ENCODE measurements at regions of chr6 and their contacts with region 1.

Region 1: GRCh38 chr6:45608252-45608911 is 230.6 kb upstream of the SUPT3H start:
- DNase-seq: peak; percentile 75 to 97
- H3K4me3 ChIP-seq: peak overlapping the region; percentile 2; the same call in 1 of the 2 replicates
- H3K27ac ChIP-seq: peak overlapping the region; percentile 95
- H3K4me1 ChIP-seq: peaks cover 62% of the 10 kb centered on the region
- H3K27me3 ChIP-seq: no peaks in the 10 kb centered on the region
- CTCF ChIP-seq: no peak

Region 2: DNA sequence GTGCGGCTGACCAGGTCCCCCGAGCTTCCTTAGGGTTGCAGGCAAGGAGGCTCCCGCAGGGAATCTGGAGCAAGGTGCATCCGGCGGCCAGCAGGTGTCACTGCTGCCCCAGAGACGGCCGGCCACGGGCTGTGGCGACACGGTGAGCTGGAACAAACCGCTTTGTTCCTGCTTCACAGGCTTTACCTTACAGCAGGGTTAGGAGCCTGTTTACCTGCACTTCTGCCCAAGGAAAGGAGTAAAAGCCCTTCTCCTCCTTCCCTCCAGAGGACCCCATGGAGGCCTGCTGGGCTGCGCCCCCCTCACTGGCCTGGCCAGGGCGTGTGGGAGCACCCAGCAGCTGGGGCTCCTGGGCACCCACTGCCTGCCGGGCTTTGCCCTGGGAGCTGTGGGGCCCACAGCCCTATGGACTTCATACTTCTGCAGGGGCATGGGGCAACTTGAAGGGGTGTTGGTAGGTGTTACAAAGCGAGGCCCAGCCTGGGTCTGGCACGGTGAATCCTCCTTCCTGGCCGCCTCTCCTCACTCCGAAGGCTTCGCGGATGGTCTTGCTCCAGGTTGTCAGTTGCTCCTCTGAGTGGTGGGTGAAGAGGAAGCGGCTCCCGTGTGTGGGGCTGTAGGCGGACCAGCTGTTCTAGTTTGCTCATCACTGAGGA is 1132.5 kb before region 1 on chr6:
- CTCF ChIA-PET with region 1: no interaction called
- POLR2A ChIA-PET with region 1: no interaction called
- intact Hi-C with region 1: loop called (anchors 5 kb)
- DNase-seq: peak; percentile 54 to 86
- H3K4me3 ChIP-seq: no peak overlapping the region
- H3K27ac ChIP-seq: no peak overlapping the region
- H3K4me1 ChIP-seq: peaks cover 18% of the 10 kb centered on the region
- H3K27me3 ChIP-seq: no peaks in the 10 kb centered on the region
- CTCF ChIP-seq: peak; percentile 92

Region 3: GRCh38 chr6:44655412-44656342 is 952.7 kb before region 1 on chr6:
- CTCF ChIA-PET with region 1: no interaction called
- POLR2A ChIA-PET with region 1: no interaction called
- intact Hi-C with region 1: loop called (anchors 1 kb)
- DNase-seq: peak; percentile 77 to 79
- H3K4me3 ChIP-seq: no peak overlapping the region
- H3K27ac ChIP-seq: peak overlapping the region; percentile 34; the same call in 1 of the 2 replicates
- H3K4me1 ChIP-seq: peaks cover 10% of the 10 kb centered on the region; the same call in 1 of the 2 replicates
- H3K27me3 ChIP-seq: no peaks in the 10 kb centered on the region
- CTCF ChIP-seq: peak; percentile 98

Region 4: GRCh38 chr6:45445749-45446549 is 162.4 kb before region 1 on chr6:
- CTCF ChIA-PET with region 1: interaction called, 5 read pairs
- POLR2A ChIA-PET with region 1: no interaction called
- intact Hi-C with region 1: loop called (anchors 1 kb)
- DNase-seq: peak; percentile 79 to 94
- H3K4me3 ChIP-seq: no peak overlapping the region
- H3K27ac ChIP-seq: peak overlapping the region; percentile 84
- H3K4me1 ChIP-seq: peaks cover 40% of the 10 kb centered on the region
- H3K27me3 ChIP-seq: no peaks in the 10 kb centered on the region
- CTCF ChIP-seq: no peak

Region 5: GRCh38 chr6:45590225-45590624 is 18.2 kb before region 1 on chr6:
- CTCF ChIA-PET with region 1: no interaction called
- POLR2A ChIA-PET with region 1: no interaction called
- intact Hi-C with region 1: loop called (anchors 1 kb)
- DNase-seq: peak in 1 of 2 experiments; percentile 87
- H3K4me3 ChIP-seq: no peak overlapping the region
- H3K27ac ChIP-seq: peak overlapping the region; percentile 88
- H3K4me1 ChIP-seq: peaks cover 62% of the 10 kb centered on the region
- H3K27me3 ChIP-seq: no peaks in the 10 kb centered on the region
- CTCF ChIP-seq: no peak

Region 6: GRCh38 chr6:45697605-45698004 is 89.2 kb after region 1 on chr6:
- CTCF ChIA-PET with region 1: no interaction called
- POLR2A ChIA-PET with region 1: no interaction called
- intact Hi-C with region 1: loop called (anchors 5 kb)
- DNase-seq: peak; percentile 59 to 86
- H3K4me3 ChIP-seq: no peak overlapping the region
- H3K27ac ChIP-seq: peak overlapping the region; percentile 64
- H3K4me1 ChIP-seq: peaks cover 25% of the 10 kb centered on the region
- H3K27me3 ChIP-seq: no peaks in the 10 kb centered on the region
- CTCF ChIP-seq: no peak

Region 7: DNA sequence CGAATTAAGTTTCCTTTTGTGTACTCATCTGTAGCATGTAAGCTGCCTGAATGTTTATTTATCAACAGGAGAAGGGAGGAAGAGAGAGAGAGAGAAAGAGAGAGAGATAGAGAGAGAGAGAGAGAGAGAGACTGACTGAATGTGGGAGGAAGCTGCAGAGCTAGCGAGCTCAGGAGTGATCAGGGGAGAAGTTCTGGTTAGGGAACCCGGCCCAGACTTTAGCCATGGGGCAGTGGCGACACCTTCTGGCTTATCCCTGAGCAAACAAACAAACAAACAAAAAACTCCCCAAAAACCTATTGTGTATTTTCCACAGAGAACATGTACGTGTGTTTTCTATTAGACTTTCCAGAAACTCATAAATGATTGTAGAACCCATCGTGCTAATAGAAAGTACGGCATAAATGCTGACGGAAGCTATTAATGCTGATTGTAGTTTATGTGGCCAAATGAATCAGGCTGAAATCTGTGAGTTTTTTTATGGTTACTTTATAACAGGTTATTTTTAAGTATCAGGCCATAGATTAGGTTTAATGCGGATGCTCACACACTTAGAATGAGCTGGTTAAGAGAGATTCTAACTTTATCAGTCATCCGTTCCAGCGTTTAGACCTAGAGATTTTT is 314.5 kb after region 1 on chr6:
- CTCF ChIA-PET with region 1: interaction called, 3 read pairs
- POLR2A ChIA-PET with region 1: no interaction called
- intact Hi-C with region 1: loop called (anchors 1 kb)
- DNase-seq: peak; percentile 41 to 64
- H3K4me3 ChIP-seq: no peak overlapping the region
- H3K27ac ChIP-seq: no peak overlapping the region
- H3K4me1 ChIP-seq: 0 out of 2 replicates have a peak, but pooled peaks cover 3% of the 10 kb centered on the region
- H3K27me3 ChIP-seq: no peaks in the 10 kb centered on the region
- CTCF ChIP-seq: peak; percentile 84

Measured in PC-9 (cell line).